ENCODE measurements at regions of chr17 and their contacts with region 1.

Region 1: GRCh38 chr17:42577532-42578281 is at the start of gene PSMC3IP:
- DNase-seq: peak; percentile 96
- ATAC-seq: peak; percentile 81
- H3K4me3 Mint-ChIP-seq: peak within 1 kb of the TSS; percentile 98
- H3K27ac Mint-ChIP-seq: peak within 1 kb of the TSS; percentile 100
- H3K4me1 Mint-ChIP-seq: peaks cover 20% of the 10 kb centered on the region
- H3K27me3 Mint-ChIP-seq: no peaks in the 10 kb centered on the region
- CTCF ChIP-seq: no peak
- total RNA-seq, gene PSMC3IP: 20.1 to 23.3 TPM (median 21.6 TPM) in 3 replicates

Region 2: GRCh38 chr17:42287926-42288802 is 289.5 kb before region 1 on chr17 and contains the start of gene STAT5A:
- CTCF ChIA-PET with region 1: no interaction called
- POLR2A ChIA-PET with region 1: no interaction called
- DNase-seq: peak; percentile 71
- ATAC-seq: peak; percentile 79
- H3K4me3 Mint-ChIP-seq: peak within 1 kb of the TSS; percentile 70
- H3K27ac Mint-ChIP-seq: peak within 1 kb of the TSS; percentile 60; the same call in 1 of the 2 replicates
- H3K4me1 Mint-ChIP-seq: peaks cover 16% of the 10 kb centered on the region
- H3K27me3 Mint-ChIP-seq: peaks cover 35% of the 10 kb centered on the region
- CTCF ChIP-seq: no peak
- total RNA-seq, gene STAT5A: 6.6 to 10.9 TPM (median 9.7 TPM) in 3 replicates

Region 3: GRCh38 chr17:42414704-42415409 is 162.8 kb before region 1 on chr17:
- CTCF ChIA-PET with region 1: no interaction called
- POLR2A ChIA-PET with region 1: no interaction called
- DNase-seq: no peak
- ATAC-seq: peak; percentile 41
- H3K4me3 Mint-ChIP-seq: no peak overlapping the region
- H3K27ac Mint-ChIP-seq: no peak overlapping the region
- H3K4me1 Mint-ChIP-seq: peaks cover 13% of the 10 kb centered on the region
- H3K27me3 Mint-ChIP-seq: peaks cover 3% of the 10 kb centered on the region; the same call in 1 of the 2 replicates
- CTCF ChIP-seq: no peak

Region 4: DNA sequence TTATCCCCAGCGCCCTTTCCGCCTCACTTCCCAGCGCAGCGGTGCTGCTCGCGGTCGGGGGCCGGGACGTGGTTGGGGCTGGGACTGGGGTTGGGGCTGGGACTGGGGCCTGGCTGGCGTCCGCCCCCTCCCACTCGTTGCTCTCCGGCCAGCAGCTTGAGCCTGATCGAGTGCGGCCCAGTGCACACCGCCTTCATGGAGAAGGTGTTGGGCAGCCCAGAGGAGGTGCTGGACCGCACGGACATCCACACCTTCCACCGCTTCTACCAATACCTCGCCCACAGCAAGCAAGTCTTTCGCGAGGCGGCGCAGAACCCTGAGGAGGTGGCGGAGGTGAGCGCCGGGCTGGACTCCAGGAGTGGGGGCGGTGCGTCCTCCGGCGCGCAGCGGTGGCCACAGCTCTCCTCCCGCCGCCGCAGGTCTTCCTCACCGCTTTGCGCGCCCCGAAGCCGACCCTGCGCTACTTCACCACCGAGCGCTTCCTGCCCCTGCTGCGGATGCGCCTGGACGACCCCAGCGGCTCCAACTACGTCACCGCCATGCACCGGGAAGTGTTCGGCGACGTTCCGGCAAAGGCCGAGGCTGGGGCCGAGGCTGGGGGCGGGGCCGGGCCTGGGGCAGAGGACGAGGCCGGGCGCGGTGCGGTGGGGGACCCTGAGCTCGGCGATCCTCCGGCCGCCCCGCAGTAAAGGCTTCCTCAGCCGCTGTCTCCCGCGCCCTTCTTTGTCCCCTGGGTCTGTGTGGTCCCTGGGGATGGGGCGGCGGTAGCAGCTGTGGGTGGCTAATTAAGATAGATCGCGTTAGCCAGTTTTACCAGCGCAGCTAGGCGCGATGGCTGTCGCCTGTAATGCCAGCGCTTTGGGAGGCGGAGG is 23.2 kb before region 1 on chr17:
- CTCF ChIA-PET with region 1: interaction called, 22 read pairs
- POLR2A ChIA-PET with region 1: interaction called, 3 read pairs
- DNase-seq: peak; percentile 93
- ATAC-seq: peak; percentile 81
- H3K4me3 Mint-ChIP-seq: peak overlapping the region; percentile 85
- H3K27ac Mint-ChIP-seq: peak overlapping the region; percentile 79
- H3K4me1 Mint-ChIP-seq: peaks cover 12% of the 10 kb centered on the region
- H3K27me3 Mint-ChIP-seq: no peaks in the 10 kb centered on the region
- CTCF ChIP-seq: no peak

Region 5: DNA sequence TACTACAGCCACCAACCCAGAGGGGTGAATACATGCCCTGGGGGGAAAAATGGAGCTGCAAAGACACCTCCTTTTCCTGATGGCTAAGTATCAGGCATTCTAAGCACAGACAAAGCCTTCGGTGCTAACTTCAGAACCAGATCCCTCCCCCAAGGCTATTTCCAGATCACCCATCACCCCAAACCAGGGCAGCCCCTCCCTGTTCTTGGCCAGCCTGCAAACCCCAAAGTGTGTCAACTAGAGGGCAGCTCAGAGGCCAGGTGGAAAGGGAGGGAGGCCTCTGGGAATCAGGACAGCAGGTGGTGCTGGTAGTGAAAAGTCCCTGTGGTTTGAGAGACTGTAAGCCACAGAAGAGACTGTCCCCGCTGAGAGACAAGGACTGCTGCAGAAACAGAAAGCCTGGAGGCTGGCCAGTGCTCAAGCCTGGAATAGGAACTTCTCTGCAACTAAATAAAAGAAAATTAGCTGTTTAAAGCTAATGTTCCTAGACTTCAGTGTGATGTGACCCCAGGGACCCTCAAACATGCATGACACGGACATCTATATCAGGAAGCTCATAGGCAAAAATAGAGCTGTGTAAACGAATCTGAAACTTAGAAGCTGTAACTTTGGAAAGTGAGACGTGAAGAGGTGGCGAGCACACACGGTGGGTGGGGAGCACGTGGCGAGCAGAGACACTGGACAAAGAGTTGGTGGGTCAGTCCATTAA is 40.9 kb after region 1 on chr17:
- CTCF ChIA-PET with region 1: interaction called, 18 read pairs
- POLR2A ChIA-PET with region 1: no interaction called
- DNase-seq: peak; percentile 70
- ATAC-seq: peak; percentile 97
- H3K4me3 Mint-ChIP-seq: no peak overlapping the region
- H3K27ac Mint-ChIP-seq: peak overlapping the region; percentile 14; the same call in 1 of the 2 replicates
- H3K4me1 Mint-ChIP-seq: peaks cover 12% of the 10 kb centered on the region
- H3K27me3 Mint-ChIP-seq: no peaks in the 10 kb centered on the region
- CTCF ChIP-seq: no peak

Region 6: GRCh38 chr17:42667123-42667951 is 89.6 kb after region 1 on chr17:
- CTCF ChIA-PET with region 1: interaction called, 40 read pairs
- POLR2A ChIA-PET with region 1: interaction called, 4 read pairs
- DNase-seq: no peak
- ATAC-seq: no peak
- H3K4me3 Mint-ChIP-seq: no peak overlapping the region
- H3K27ac Mint-ChIP-seq: peak overlapping the region; percentile 53; the same call in 1 of the 2 replicates
- H3K4me1 Mint-ChIP-seq: peaks cover 29% of the 10 kb centered on the region
- H3K27me3 Mint-ChIP-seq: peaks cover 3% of the 10 kb centered on the region
- CTCF ChIP-seq: no peak

Region 7: GRCh38 chr17:42744806-42745617 is 167.3 kb after region 1 on chr17 and contains the start of gene EZH1:
- CTCF ChIA-PET with region 1: interaction called, 11 read pairs
- POLR2A ChIA-PET with region 1: no interaction called
- DNase-seq: peak; percentile 94
- ATAC-seq: peak; percentile 93
- H3K4me3 Mint-ChIP-seq: peak within 1 kb of the TSS; percentile 86
- H3K27ac Mint-ChIP-seq: peak within 1 kb of the TSS; percentile 96
- H3K4me1 Mint-ChIP-seq: peaks cover 36% of the 10 kb centered on the region
- H3K27me3 Mint-ChIP-seq: peaks cover 27% of the 10 kb centered on the region
- CTCF ChIP-seq: no peak
- total RNA-seq, gene EZH1: 19.8 to 24.1 TPM (median 22.4 TPM) in 3 replicates

Region 8: GRCh38 chr17:42779936-42780850 is 202.5 kb after region 1 on chr17 and contains the start of gene WNK4:
- CTCF ChIA-PET with region 1: interaction called, 13 read pairs
- POLR2A ChIA-PET with region 1: no interaction called
- DNase-seq: peak; percentile 66
- ATAC-seq: peak; percentile 71
- H3K4me3 Mint-ChIP-seq: peak within 1 kb of the TSS; percentile 70
- H3K27ac Mint-ChIP-seq: peak within 1 kb of the TSS; percentile 54
- H3K4me1 Mint-ChIP-seq: peaks cover 20% of the 10 kb centered on the region
- H3K27me3 Mint-ChIP-seq: peaks cover 41% of the 10 kb centered on the region
- CTCF ChIP-seq: no peak
- total RNA-seq, gene WNK4: 1.4 to 1.7 TPM (median 1.5 TPM) in 3 replicates

Region 9: DNA sequence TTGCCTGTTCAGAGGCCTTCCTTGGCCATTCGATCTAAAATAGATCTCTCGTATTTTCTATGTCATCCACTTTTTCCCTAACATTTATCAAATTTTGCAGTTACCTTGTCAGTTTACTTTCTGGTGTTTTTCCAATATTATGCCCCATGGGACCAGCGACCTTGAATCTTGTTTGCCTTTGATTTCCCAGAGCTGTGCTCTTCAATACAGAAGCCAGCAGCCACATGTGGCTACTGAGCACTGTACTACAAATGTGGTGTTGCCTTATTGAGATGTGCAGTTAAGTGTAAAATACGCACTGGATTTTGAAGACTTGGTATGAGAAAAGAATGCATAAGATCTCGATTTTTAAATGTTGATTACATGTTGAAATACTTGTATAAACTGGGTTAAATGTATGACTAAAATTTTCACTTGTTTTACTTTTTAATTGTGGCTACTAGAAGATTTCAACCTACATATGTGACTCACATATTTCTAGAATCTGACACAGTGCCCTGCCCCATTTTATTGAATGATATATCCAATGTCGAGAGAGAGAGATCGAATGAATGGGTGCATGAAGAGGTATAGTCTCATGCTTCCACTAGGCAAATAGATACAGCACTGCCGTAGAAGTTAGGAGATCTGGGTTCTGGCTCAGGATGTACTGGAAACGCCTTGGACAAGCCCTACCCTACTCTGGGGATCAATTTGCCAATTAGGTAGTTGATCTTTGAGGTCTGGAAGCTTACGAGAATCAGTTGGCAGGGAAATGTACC is 254.7 kb after region 1 on chr17:
- CTCF ChIA-PET with region 1: no interaction called
- POLR2A ChIA-PET with region 1: no interaction called
- DNase-seq: no peak
- ATAC-seq: peak; percentile 25
- H3K4me3 Mint-ChIP-seq: peak overlapping the region; percentile 93
- H3K27ac Mint-ChIP-seq: peak overlapping the region; percentile 97
- H3K4me1 Mint-ChIP-seq: peaks cover 16% of the 10 kb centered on the region
- H3K27me3 Mint-ChIP-seq: peaks cover 21% of the 10 kb centered on the region
- CTCF ChIP-seq: no peak